ENCODE measurements at regions of chr3 and their contacts with region 1.

Region 1: DNA sequence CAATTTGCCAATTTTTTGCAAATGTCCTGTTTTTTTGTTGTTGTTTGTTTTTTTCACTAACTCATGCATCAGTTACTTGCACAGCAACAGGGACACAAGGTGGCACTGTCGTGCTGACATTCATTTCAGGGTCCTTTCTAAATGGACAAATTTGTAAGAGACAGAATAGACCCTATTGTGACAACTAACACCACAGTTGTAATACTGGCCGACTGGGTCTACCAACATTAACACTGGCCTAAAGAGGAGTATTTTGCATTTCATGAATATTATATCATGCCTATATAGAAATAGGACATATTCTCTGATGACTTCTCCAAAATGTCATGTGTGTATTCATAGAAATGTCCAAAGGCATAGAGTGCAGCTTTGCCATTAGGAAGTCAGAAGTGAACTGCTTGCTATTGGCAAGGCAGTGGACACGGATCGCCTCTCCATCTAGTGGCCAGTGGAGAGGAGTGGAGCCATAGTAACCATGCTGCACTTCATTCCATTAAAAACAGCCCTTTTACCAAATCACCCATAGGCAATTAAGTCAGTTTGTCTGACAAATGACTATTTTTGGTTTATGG is 54.8 kb downstream of the ZBTB20 start:
- DNase-seq: peak; percentile 61 to 73 (median 67)
- ATAC-seq: peak; percentile 98 to 100 (median 99)
- H3K4me3 ChIP-seq: no peak overlapping the region
- H3K27ac ChIP-seq: peak overlapping the region in 1 of 3 donors; percentile 16
- H3K4me1 ChIP-seq: peaks cover 0 to 7% (median 0%) of the 10 kb centered on the region in 4 donors
- H3K27me3 ChIP-seq: no peaks in the 10 kb centered on the region
- CTCF ChIP-seq: peak; percentile 62 to 75 (median 66)
- POLR2A ChIP-seq: no peak

Region 2: GRCh38 chr3:114879059-114880031 is 213.0 kb before region 1 on chr3:
- intact Hi-C with region 1: no loop called
- DNase-seq: no peak
- ATAC-seq: peak; percentile 55 to 77 (median 66)
- H3K4me3 ChIP-seq: no peak overlapping the region
- H3K27ac ChIP-seq: peak overlapping the region; percentile 7 to 63 (median 28)
- H3K4me1 ChIP-seq: peaks cover 0 to 46% (median 19%) of the 10 kb centered on the region in 4 donors
- H3K27me3 ChIP-seq: no peaks in the 10 kb centered on the region
- CTCF ChIP-seq: no peak
- POLR2A ChIP-seq: no peak

Region 3: GRCh38 chr3:115147329-115148141 is 55.2 kb after region 1 on chr3:
- intact Hi-C with region 1: no loop called
- DNase-seq: peak; percentile 99
- ATAC-seq: peak; percentile 82 to 91 (median 86)
- H3K4me3 ChIP-seq: peak overlapping the region; percentile 74 to 80 (median 79)
- H3K27ac ChIP-seq: peak overlapping the region; percentile 95 to 98 (median 98)
- H3K4me1 ChIP-seq: no peaks in the 10 kb centered on the region
- H3K27me3 ChIP-seq: no peaks in the 10 kb centered on the region
- CTCF ChIP-seq: no peak
- POLR2A ChIP-seq: peak; percentile 91

Region 4: GRCh38 chr3:115169808-115170207 is 77.5 kb after region 1 on chr3:
- intact Hi-C with region 1: loop called in 1 of 2 experiments (anchors 10 kb)
- DNase-seq: no peak
- ATAC-seq: no peak
- H3K4me3 ChIP-seq: no peak overlapping the region
- H3K27ac ChIP-seq: no peak overlapping the region
- H3K4me1 ChIP-seq: no peaks in the 10 kb centered on the region
- H3K27me3 ChIP-seq: no peaks in the 10 kb centered on the region
- CTCF ChIP-seq: peak; percentile 21 to 46 (median 41)
- POLR2A ChIP-seq: no peak

Measured in right lobe of liver (tissue), 6 donors.